ENCODE measurements at regions of chr2 and their contacts with region 1.

Region 1: DNA sequence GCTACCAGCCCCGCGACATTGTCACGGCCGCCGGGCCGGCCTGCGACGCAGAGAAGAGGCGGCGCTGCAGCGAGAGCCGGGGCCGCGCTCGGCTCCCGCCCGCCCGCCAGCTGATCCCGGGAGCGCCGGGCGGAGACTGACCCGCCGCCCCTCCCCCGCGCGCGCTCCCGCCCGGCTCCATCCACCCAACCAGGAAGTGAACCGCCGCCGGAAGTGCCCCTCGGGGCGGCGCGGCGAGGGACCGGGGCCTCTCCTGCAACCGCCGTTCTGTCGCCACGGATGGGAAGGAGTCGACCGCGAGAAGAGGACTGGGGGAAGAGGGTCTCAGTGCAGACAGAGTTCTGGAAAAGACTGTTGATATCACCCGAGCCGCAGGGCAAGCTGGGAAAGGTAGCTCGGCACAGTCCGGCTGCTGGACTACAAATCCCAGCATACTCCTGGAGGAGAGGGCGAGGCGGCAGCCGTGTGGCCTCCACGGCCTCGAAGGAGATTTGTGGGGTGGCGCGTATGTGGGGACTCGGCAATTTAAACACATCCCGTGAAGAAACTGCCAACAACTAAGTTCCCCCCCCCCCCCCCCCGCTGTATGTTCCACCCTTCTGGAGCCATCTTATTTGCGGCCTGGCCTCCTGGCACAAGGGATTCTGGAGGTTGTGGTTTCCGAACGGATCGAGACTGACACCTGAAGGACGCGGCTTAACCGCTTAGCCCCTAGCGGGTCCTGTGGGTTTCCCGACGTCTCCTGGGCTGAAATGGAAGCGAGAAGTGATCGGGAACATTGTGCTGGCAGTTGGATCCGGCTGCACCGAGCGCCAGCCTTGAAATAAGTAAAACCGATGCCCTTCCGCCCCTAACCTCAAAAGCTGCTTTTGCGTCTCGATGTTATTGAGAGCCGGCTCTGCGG is at the start of gene AAK1:
- DNase-seq: peak; percentile 80 to 92 (median 88)
- H3K4me3 ChIP-seq: peak within 1 kb of the TSS; percentile 73 to 100 (median 96)
- H3K27ac ChIP-seq: peak within 1 kb of the TSS; percentile 91 to 100 (median 99)
- H3K27me3 ChIP-seq: no peaks in the 10 kb centered on the region
- CTCF ChIP-seq: peak in 42 of 56 donors; percentile 3 to 59 (median 27)
- total RNA-seq, gene AAK1: 97.4 to 260 (median 192) TPM

Region 2: DNA sequence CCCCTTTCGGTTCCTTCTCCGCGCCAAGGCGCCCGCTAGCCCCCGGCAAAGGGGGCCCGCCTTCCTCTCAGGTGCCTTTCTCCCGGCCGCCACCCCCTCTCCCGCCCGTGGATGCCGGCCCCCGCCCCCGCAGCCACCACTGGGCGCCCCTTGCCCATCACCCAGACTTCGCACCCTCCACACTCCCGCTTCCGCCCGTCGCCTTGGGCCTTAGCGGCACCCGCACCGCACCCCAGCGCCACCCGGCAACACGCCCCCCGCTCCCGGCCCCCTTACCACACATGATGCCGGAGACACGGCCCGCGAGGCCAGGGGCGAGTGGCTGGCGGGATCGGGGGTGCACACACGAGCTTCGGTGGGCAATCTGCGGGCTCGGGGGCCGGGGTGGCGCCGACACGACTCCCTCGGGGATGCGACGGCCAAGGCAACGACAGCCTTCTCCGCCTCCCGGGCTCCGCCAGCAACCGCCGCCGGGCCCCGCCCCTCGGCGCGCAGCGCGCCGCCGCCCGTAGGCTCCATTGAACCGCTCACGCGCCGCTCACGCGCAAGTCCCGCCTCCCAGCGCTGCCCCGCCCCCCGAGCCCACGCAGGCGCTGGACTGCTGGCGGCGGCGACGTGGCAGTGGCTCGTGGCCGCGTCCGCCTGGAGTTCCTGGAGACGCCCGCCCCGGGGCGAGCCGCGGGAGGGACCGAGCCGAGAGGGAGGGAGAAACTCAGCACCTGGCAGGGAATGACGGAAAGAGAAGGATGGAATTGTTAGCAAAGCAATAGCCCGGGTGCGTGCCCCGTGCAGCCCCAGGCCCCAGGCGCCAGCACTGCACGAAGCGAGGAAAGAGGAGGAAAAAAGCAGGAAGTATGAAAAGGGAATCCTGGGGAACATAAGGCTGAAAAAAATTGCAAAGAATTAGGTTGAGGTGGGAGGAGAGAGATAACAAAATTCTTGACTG is 256.8 kb before region 1 on chr2 and contains the start of gene GFPT1:
- intact Hi-C with region 1: loop called in 1 of 2 experiments (anchors 10 kb)
- DNase-seq: peak; percentile 81 to 97 (median 91)
- H3K4me3 ChIP-seq: peak within 1 kb of the TSS; percentile 62 to 99 (median 89)
- H3K27ac ChIP-seq: peak within 1 kb of the TSS in 55 of 59 donors; percentile 9 to 91 (median 73)
- H3K27me3 ChIP-seq: no peaks in the 10 kb centered on the region
- CTCF ChIP-seq: peak in 29 of 56 donors; percentile 3 to 60 (median 28)
- total RNA-seq, gene GFPT1: 18.0 to 44.5 (median 31.9) TPM

Region 3: GRCh38 chr2:69436938-69437750 is 206.7 kb before region 1 on chr2 and contains the start of gene NFU1:
- intact Hi-C with region 1: loop called in 1 of 2 experiments (anchors 2 kb)
- DNase-seq: peak; percentile 90 to 97 (median 95)
- H3K4me3 ChIP-seq: peak within 1 kb of the TSS; percentile 60 to 99 (median 92)
- H3K27ac ChIP-seq: peak within 1 kb of the TSS; percentile 86 to 100 (median 98)
- H3K27me3 ChIP-seq: no peaks in the 10 kb centered on the region
- CTCF ChIP-seq: peak; percentile 29 to 85 (median 68)
- total RNA-seq, gene NFU1: 27.9 to 60.5 (median 41.9) TPM

Region 4: DNA sequence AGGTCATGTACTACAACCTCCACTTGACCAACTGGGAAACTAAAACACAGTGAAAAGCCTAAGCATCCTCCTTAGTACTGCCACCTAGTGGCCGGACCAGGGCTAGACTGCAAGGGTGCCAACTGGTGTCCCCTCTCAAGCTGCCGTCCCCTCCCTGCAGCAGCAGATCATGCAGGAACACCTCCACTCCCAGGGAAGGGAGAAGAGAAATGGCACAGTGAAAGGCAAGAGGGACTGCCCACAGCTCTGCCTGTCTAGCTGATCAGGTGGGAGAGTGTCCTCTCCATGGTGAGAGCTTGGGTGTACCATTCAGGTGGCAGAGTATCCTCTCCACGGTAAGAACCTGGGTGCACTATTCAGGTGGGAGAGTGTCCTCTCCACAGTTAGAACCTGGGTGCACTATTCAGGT is 78.4 kb before region 1 on chr2:
- intact Hi-C with region 1: loop called (anchors 5 kb)
- DNase-seq: peak in 9 of 10 donors; percentile 31 to 72 (median 57)
- H3K4me3 ChIP-seq: no peak overlapping the region
- H3K27ac ChIP-seq: peak overlapping the region in 1 of 59 donors; percentile 10
- H3K27me3 ChIP-seq: no peaks in the 10 kb centered on the region
- CTCF ChIP-seq: peak; percentile 49 to 87 (median 76)

Region 5: GRCh38 chr2:69704446-69704845 is 60.6 kb after region 1 on chr2:
- intact Hi-C with region 1: loop called in 1 of 2 experiments (anchors 5 kb)
- DNase-seq: no peak
- H3K4me3 ChIP-seq: no peak overlapping the region
- H3K27ac ChIP-seq: peak overlapping the region in 4 of 59 donors; percentile 9 to 40 (median 28)
- H3K27me3 ChIP-seq: no peaks in the 10 kb centered on the region
- CTCF ChIP-seq: no peak

Region 6: GRCh38 chr2:69717861-69718273 is 74.0 kb after region 1 on chr2:
- intact Hi-C with region 1: loop called in 1 of 2 experiments (anchors 5 kb)
- DNase-seq: no peak
- H3K4me3 ChIP-seq: no peak overlapping the region
- H3K27ac ChIP-seq: peak overlapping the region in 1 of 59 donors; percentile 1
- H3K27me3 ChIP-seq: no peaks in the 10 kb centered on the region
- CTCF ChIP-seq: no peak

Region 7: DNA sequence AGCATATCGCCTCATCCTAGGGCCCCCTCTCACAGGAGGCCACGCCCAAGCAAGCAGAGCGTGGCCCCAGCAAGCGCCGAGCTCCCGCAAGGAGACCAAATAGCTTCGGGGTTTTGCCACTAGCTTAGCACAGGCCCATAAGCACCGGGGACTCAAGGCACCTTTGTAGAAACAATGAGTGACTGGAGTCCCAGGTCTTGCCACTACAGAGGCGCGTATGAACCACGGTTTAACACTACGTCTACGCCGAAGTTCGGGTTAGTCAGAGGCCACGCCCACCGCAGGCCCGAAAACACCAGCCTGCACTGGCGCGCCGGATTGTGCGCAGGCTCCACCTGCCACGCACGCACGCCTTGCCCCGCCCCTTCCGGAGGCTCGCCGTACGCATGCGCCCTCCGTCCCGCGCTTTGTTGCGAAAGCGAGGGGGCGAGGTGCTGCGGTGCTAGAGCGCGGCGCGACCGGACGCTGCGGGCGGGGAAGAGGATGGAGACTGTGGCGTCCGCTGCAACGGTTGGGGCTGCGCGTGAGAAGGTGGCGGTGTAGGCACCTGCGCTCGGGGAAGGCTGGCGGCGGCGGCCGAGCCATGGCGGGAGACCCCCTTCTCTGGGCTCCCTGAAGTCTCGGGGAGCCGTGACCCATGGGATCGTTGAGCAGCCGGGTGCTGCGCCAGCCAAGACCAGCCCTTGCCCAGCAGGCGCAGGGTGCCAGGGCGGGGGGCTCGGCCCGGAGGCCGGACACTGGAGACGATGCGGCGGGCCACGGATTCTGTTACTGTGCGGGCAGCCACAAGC is 185.6 kb after region 1 on chr2 and contains the start of gene GMCL1:
- intact Hi-C with region 1: loop called in 1 of 2 experiments (anchors 5 kb)
- DNase-seq: peak; percentile 93 to 97 (median 96)
- H3K4me3 ChIP-seq: peak within 1 kb of the TSS; percentile 78 to 100 (median 98)
- H3K27ac ChIP-seq: peak within 1 kb of the TSS; percentile 36 to 98 (median 93)
- H3K27me3 ChIP-seq: no peaks in the 10 kb centered on the region
- CTCF ChIP-seq: peak in 43 of 56 donors; percentile 3 to 70 (median 45)
- total RNA-seq, gene GMCL1: 11.5 to 39.4 (median 22.1) TPM

Measured in dorsolateral prefrontal cortex (tissue), 120 donors.